ENCODE measurements at regions of chr16 and their contacts with region 1.

Region 1: GRCh38 chr16:3150346-3151218 is 15.8 kb downstream of the ZNF213 start:
- DNase-seq: peak; percentile 97
- H3K4me3 ChIP-seq: peak overlapping the region; percentile 79
- H3K27ac ChIP-seq: peak overlapping the region; percentile 66
- H3K4me1 ChIP-seq: peaks cover 17% of the 10 kb centered on the region
- CTCF ChIP-seq: no peak

Region 2: DNA sequence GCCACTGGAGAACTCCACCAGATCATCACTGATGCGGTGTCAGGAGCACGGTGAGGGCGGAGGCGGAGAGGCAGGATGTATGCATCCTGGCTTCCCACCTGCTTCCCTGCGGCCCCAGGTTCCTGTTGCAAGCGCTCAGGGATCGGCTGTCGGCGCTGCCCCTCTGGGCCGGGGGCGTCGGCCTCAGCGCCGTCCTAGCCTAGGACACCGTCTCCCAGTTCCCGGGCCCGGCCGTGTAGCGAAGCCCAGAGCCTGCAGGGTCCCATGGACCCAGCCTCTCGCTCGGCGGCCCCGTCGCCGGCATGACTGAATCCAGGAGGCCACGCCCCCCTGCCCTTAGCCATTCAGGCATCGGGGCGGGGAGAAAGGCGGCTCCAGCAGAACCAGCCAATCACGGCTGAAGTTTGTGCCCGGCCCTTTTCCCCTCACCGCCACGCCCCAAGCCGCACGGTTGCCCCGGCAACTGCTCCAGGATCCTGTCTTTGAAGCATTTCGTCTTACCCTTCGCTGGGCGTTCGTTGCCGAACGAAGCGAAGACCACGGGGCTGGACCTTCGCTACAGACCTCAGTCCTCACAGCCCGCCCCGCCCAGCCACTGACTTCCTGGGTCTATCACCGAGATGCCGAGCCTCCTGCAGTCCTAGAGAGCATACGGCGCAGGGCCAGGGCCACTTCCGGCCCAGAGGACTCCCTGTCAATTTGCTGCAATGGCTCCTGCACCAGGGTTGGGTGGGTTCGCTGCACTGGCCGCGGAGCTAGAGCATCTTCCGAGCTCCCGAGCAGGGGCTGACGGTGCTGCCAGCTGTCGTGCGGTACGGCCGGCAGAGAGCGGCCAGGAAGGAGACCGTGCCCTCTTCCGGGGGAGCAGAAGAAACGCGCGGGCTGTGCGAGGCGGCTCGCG is 26.3 kb before region 1 on chr16:
- CTCF ChIA-PET with region 1: no interaction called
- POLR2A ChIA-PET with region 1: no interaction called
- intact Hi-C with region 1: no loop called
- DNase-seq: peak; percentile 97
- H3K4me3 ChIP-seq: peak overlapping the region; percentile 72
- H3K27ac ChIP-seq: peak overlapping the region; percentile 41
- H3K4me1 ChIP-seq: peaks cover 19% of the 10 kb centered on the region
- CTCF ChIP-seq: 0 out of 2 replicates have a peak, but pooled peaks have one; percentile 37

Region 3: GRCh38 chr16:3134564-3135417 is 15.8 kb before region 1 on chr16 and contains the start of gene ZNF213:
- CTCF ChIA-PET with region 1: no interaction called
- POLR2A ChIA-PET with region 1: interaction called, 11 read pairs
- intact Hi-C with region 1: loop called (anchors 1 kb)
- DNase-seq: peak; percentile 98
- H3K4me3 ChIP-seq: peak within 1 kb of the TSS; percentile 79
- H3K27ac ChIP-seq: peak within 1 kb of the TSS; percentile 71
- H3K4me1 ChIP-seq: peaks cover 11% of the 10 kb centered on the region
- CTCF ChIP-seq: no peak
- total RNA-seq, gene ZNF213: 3.4 and 4.8 TPM in 2 replicates

Region 4: DNA sequence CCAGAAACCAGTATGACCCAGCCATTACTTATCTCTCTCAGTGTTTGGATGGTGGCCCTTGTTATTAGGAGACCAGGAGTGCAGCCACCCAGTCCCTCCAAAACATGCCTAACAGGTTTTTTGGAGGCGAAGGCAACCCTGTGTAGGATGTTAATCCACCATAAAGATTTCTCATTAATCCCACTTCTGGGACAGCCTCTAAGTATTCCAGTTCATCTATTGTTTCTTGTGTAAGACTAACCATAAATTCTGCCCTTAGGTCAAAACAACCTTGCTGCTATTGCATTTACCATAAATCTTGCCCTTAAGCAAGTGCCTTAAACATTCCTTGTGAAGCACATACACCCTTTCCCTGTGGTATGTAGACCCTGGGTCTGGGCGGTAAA is 15.9 kb after region 1 on chr16:
- CTCF ChIA-PET with region 1: interaction called, 4 read pairs
- POLR2A ChIA-PET with region 1: no interaction called
- intact Hi-C with region 1: loop called (anchors 1 kb)
- DNase-seq: no peak
- H3K4me3 ChIP-seq: no peak overlapping the region
- H3K27ac ChIP-seq: no peak overlapping the region
- H3K4me1 ChIP-seq: peaks cover 7% of the 10 kb centered on the region
- CTCF ChIP-seq: no peak

Region 5: GRCh38 chr16:3188925-3189825 is 38.6 kb after region 1 on chr16:
- CTCF ChIA-PET with region 1: no interaction called
- POLR2A ChIA-PET with region 1: no interaction called
- intact Hi-C with region 1: no loop called
- DNase-seq: no peak
- H3K4me3 ChIP-seq: no peak overlapping the region
- H3K27ac ChIP-seq: no peak overlapping the region
- H3K4me1 ChIP-seq: no peaks in the 10 kb centered on the region
- CTCF ChIP-seq: no peak

Region 6: GRCh38 chr16:3264137-3265036 is 113.8 kb after region 1 on chr16:
- CTCF ChIA-PET with region 1: no interaction called
- POLR2A ChIA-PET with region 1: no interaction called
- intact Hi-C with region 1: loop called (anchors 10 kb)
- DNase-seq: peak; percentile 99
- H3K4me3 ChIP-seq: peak overlapping the region; percentile 87
- H3K27ac ChIP-seq: peak overlapping the region; percentile 83
- H3K4me1 ChIP-seq: peaks cover 24% of the 10 kb centered on the region
- CTCF ChIP-seq: peak; percentile 54

Region 7: DNA sequence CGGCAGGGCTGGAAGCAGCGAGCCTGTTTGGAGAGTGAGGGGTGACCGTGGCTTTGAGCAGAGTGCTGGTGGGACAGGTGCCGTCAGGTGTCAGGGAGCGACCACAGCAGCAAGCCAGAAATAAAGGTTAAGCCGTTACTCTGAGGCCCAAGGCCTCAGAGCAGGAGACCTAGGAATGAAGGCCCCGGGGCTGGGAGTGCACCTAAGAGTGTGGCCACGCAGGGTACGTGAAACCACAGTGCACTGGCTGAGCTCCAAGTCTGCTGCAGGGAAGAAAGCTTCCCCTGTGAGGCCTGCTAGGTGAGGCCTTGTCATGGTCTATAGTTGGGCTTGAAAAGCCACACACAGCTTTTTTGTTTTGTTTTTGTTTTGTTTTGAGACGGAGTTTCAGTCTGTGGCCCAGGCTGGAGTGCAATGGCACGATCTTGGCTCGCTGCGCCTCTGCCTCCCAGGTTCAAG is 358.9 kb after region 1 on chr16:
- CTCF ChIA-PET with region 1: no interaction called
- POLR2A ChIA-PET with region 1: no interaction called
- intact Hi-C with region 1: loop called (anchors 10 kb)
- DNase-seq: no peak
- H3K4me3 ChIP-seq: no peak overlapping the region
- H3K27ac ChIP-seq: no peak overlapping the region
- H3K4me1 ChIP-seq: no peaks in the 10 kb centered on the region
- CTCF ChIP-seq: no peak

Measured in OCI-LY7 (cell line).